A549 (cell line): ENCODE measurements at regions of chr2 and their contacts with region 1.

Region 1: GRCh38 chr2:152335010-152335725 is at the start of gene FMNL2:
- DNase-seq: peak; percentile 66 to 85
- ATAC-seq: peak; percentile 80 to 91
- H3K4me3 ChIP-seq: peak within 1 kb of the TSS; percentile 98
- H3K27ac ChIP-seq: peak within 1 kb of the TSS; percentile 91 to 94
- H3K4me1 ChIP-seq: peaks cover 38% of the 10 kb centered on the region
- CTCF ChIP-seq: no peak
- EP300 ChIP-seq: no peak
- POLR2A ChIP-seq: peak; percentile 87
- RAD21 ChIP-seq: no peak; a peak in 1 of 5 replicates
- polyA plus RNA-seq, gene FMNL2: 33.9 and 36.5 TPM in 2 replicates

Region 2: GRCh38 chr2:152200562-152201465 is 134.4 kb before region 1 on chr2:
- CTCF ChIA-PET with region 1: no interaction called
- POLR2A ChIA-PET with region 1: interaction called, 10 read pairs
- DNase-seq: peak; percentile 82 to 92
- ATAC-seq: peak; percentile 100
- H3K4me3 ChIP-seq: no peak overlapping the region
- H3K27ac ChIP-seq: peak overlapping the region; percentile 52 to 74
- H3K4me1 ChIP-seq: peaks cover 16% of the 10 kb centered on the region
- CTCF ChIP-seq: no peak
- EP300 ChIP-seq: peak in 1 of 2 experiments; percentile 45; a peak in 2 of 5 replicates
- POLR2A ChIP-seq: no peak
- RAD21 ChIP-seq: peak; percentile 14 to 51; a peak in 3 of 5 replicates